ENCODE measurements at regions of chr5 and their contacts with region 1.

Region 1: GRCh38 chr5:138077065-138077696 is 6.7 kb upstream of the WNT8A start:
- H3K4me3 ChIP-seq: no peak overlapping the region
- H3K27ac ChIP-seq: no peak overlapping the region
- H3K4me1 ChIP-seq: no peaks in the 10 kb centered on the region
- CTCF ChIP-seq: peak; percentile 74; the same call in 1 of the 2 replicates

Region 2: GRCh38 chr5:137935190-137935589 is 142.0 kb before region 1 on chr5:
- CTCF ChIA-PET with region 1: no interaction called
- POLR2A ChIA-PET with region 1: no interaction called
- H3K4me3 ChIP-seq: no peak overlapping the region
- H3K27ac ChIP-seq: no peak overlapping the region
- H3K4me1 ChIP-seq: no peaks in the 10 kb centered on the region
- CTCF ChIP-seq: no peak

Region 3: GRCh38 chr5:138065102-138065501 is 12.1 kb before region 1 on chr5:
- CTCF ChIA-PET with region 1: interaction called, 11 read pairs
- POLR2A ChIA-PET with region 1: no interaction called
- H3K4me3 ChIP-seq: no peak overlapping the region
- H3K27ac ChIP-seq: no peak overlapping the region
- H3K4me1 ChIP-seq: no peaks in the 10 kb centered on the region
- CTCF ChIP-seq: 0 out of 2 replicates have a peak, but pooled peaks have one; percentile 32

Region 4: GRCh38 chr5:138102454-138103318 is 25.5 kb after region 1 on chr5:
- CTCF ChIA-PET with region 1: interaction called, 15 read pairs
- POLR2A ChIA-PET with region 1: no interaction called
- H3K4me3 ChIP-seq: no peak overlapping the region
- H3K27ac ChIP-seq: no peak overlapping the region
- H3K4me1 ChIP-seq: no peaks in the 10 kb centered on the region
- CTCF ChIP-seq: no peak

Region 5: DNA sequence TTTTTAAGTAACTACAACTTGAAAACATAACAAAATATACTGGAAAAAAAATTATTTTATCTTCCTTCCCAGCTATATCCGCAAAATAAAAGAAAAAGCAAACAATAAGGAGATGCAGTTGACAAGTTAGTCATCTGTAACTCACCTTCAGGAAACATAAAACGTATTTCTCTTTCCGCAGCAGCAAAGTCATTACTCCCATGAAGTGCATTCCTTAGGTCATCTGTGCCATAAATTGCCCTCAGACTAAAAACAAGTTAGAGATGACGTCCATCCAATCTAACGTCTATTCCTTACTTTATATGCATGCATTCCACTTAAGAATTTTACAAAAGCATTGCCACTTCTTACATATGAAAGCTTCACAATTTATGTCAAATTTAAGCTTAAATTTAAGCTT is 51.2 kb after region 1 on chr5:
- CTCF ChIA-PET with region 1: interaction called, 96 read pairs
- POLR2A ChIA-PET with region 1: no interaction called
- H3K4me3 ChIP-seq: no peak overlapping the region
- H3K27ac ChIP-seq: no peak overlapping the region
- H3K4me1 ChIP-seq: peaks cover 12% of the 10 kb centered on the region
- CTCF ChIP-seq: no peak

Region 6: DNA sequence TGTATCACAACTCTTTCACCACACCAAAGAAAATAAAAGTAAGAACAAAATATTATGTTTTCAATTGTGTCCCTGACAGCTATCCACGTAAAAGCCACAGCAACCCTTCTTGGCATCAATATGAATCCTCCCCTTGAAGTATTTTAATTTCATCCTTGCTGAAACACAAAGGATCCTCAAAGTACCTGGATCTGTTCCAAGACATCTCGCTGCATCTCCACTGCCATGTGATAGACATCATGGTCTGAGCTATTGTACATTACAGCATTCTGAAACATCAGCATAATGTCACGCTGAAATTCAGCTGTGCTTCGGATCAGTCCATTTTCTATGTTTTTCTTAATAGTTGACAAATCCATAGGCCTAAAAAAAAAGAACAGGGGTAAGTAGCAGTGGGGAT is 83.5 kb after region 1 on chr5:
- CTCF ChIA-PET with region 1: interaction called, 13 read pairs
- POLR2A ChIA-PET with region 1: no interaction called
- H3K4me3 ChIP-seq: no peak overlapping the region
- H3K27ac ChIP-seq: no peak overlapping the region
- H3K4me1 ChIP-seq: no peaks in the 10 kb centered on the region
- CTCF ChIP-seq: no peak

Measured in HEK293 (cell line).